Heart left ventricle (tissue), 16 donors: ENCODE measurements at regions of chr21 and their contacts with region 1.

Region 1: DNA sequence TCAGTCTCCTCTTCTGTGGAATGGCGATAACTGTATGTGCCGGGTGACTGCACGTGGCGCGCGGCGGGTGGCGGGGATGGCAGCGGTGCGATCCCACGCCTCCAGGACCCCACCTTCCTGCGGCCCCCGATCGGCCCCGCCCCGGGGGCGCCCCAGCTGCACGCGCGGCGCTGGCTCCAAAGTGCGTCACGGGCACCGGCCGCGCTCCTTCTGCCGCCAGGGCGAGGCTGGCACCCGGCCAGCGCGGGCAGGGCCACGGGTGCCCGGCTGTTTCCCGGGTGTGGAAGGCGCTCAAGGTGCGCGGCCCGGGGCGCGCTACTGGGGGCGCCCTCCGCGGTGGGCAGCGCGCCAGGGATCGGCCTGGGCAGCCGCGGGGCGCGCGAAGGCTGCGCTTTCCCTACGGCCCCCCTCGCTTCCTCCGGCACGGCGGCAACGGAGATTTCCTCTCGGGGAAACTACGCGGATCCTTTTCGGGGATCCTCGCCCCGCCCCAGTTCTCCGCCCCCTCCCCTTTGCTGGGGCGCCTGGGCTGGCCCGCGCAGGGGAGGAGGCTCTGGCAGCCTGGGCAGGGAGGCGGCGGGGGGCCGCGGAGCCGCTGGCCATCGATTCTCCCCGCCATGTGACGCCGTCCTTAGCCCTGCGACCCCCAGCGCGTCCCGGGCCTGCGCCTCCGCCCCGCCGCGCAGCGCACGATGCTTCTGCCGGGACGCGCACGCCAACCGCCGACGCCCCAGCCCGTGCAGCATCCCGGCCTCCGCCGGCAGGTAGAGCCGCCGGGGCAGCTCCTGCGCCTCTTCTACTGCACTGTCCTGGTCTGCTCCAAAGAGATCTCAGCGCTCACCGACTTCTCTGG is at the start of gene EVA1C:
- DNase-seq: peak; percentile 75 to 86 (median 82)
- ATAC-seq: peak; percentile 29 to 78 (median 60)
- H3K4me3 ChIP-seq: peak within 1 kb of the TSS; percentile 36 to 95 (median 76)
- H3K27ac ChIP-seq: peak within 1 kb of the TSS; percentile 94 to 100 (median 99)
- H3K4me1 ChIP-seq: peaks cover 12 to 64% (median 39%) of the 10 kb centered on the region in 12 donors
- H3K27me3 ChIP-seq: no peaks in the 10 kb centered on the region
- CTCF ChIP-seq: peak in 8 of 12 donors; percentile 9 to 51 (median 28)
- POLR2A ChIP-seq: peak in 1 of 2 donors; percentile 33
- total RNA-seq, gene EVA1C: 10.1 to 44.4 (median 19.7) TPM

Region 2: GRCh38 chr21:31957631-31958030 is 454.8 kb before region 1 on chr21:
- intact Hi-C with region 1: no loop called
- DNase-seq: no peak
- ATAC-seq: no peak
- H3K4me3 ChIP-seq: no peak overlapping the region
- H3K27ac ChIP-seq: no peak overlapping the region
- H3K4me1 ChIP-seq: no peaks in the 10 kb centered on the region
- H3K27me3 ChIP-seq: no peaks in the 10 kb centered on the region
- CTCF ChIP-seq: no peak
- POLR2A ChIP-seq: no peak

Region 3: DNA sequence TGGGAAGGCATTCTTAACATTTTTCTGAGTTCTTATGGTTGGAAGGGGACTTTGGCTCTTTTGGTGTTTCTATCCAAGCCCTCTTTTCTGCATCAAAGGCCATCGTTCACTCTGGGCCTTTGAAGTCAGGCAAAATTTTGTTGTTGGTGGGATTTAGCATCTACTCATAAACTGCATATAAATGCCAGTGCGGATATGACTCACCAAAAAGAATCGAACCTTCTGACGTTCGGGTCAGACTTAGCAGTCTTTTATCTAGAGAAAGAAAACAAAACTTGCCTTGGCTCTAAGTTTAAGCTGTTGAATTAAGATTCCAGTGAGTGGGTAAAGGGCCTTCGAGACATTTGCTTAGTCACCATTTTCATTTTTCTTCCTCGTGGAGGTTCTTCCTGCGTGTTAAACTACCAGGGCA is 51.5 kb after region 1 on chr21:
- intact Hi-C with region 1: loop called in 5 of 10 experiments (anchors 5 to 10 kb)
- DNase-seq: no peak
- ATAC-seq: peak in 3 of 4 donors; percentile 53 to 63 (median 57)
- H3K4me3 ChIP-seq: no peak overlapping the region
- H3K27ac ChIP-seq: peak overlapping the region in 9 of 12 donors; percentile 13 to 74 (median 41)
- H3K4me1 ChIP-seq: peaks cover 0 to 17% (median 0%) of the 10 kb centered on the region in 12 donors
- H3K27me3 ChIP-seq: no peaks in the 10 kb centered on the region
- CTCF ChIP-seq: no peak
- POLR2A ChIP-seq: no peak

Region 4: GRCh38 chr21:32520875-32521735 is 108.7 kb after region 1 on chr21:
- intact Hi-C with region 1: loop called in 7 of 10 experiments (anchors 2 to 5 kb)
- DNase-seq: peak; percentile 93 to 94 (median 94)
- ATAC-seq: peak; percentile 59 to 76 (median 72)
- H3K4me3 ChIP-seq: no peak overlapping the region
- H3K27ac ChIP-seq: peak overlapping the region; percentile 63 to 95 (median 84)
- H3K4me1 ChIP-seq: peaks cover 18 to 74% (median 59%) of the 10 kb centered on the region in 12 donors
- H3K27me3 ChIP-seq: no peaks in the 10 kb centered on the region
- CTCF ChIP-seq: no peak
- POLR2A ChIP-seq: no peak

Region 5: GRCh38 chr21:32569261-32570230 is 157.2 kb after region 1 on chr21:
- intact Hi-C with region 1: loop called in 2 of 10 experiments (anchors 5 kb)
- DNase-seq: peak; percentile 72 to 85 (median 75)
- ATAC-seq: peak; percentile 84 to 94 (median 94)
- H3K4me3 ChIP-seq: peak overlapping the region; percentile 28 to 73 (median 60)
- H3K27ac ChIP-seq: peak overlapping the region; percentile 37 to 88 (median 81)
- H3K4me1 ChIP-seq: peaks cover 0 to 19% (median 4%) of the 10 kb centered on the region in 12 donors
- H3K27me3 ChIP-seq: no peaks in the 10 kb centered on the region
- CTCF ChIP-seq: peak; percentile 64 to 90 (median 83)
- POLR2A ChIP-seq: peak in 1 of 2 donors; percentile 32